ENCODE measurements at regions of chr14 and their contacts with region 1.

Region 1: GRCh38 chr14:91286530-91286937 is 42.0 kb upstream of the GPR68 start:
- DNase-seq: peak; percentile 75 to 83
- H3K4me3 ChIP-seq: no peak overlapping the region
- H3K27ac ChIP-seq: no peak overlapping the region
- H3K4me1 ChIP-seq: peaks cover 0 to 8% of the 10 kb centered on the region in 2 donors
- H3K27me3 ChIP-seq: no peaks in the 10 kb centered on the region
- CTCF ChIP-seq: peak; percentile 59 to 95 (median 84)
- POLR2A ChIP-seq: no peak

Region 2: GRCh38 chr14:90903101-90903500 is 383.4 kb before region 1 on chr14:
- intact Hi-C with region 1: loop called (anchors 5 kb)
- DNase-seq: peak; percentile 53 to 68
- H3K4me3 ChIP-seq: no peak overlapping the region
- H3K27ac ChIP-seq: no peak overlapping the region
- H3K4me1 ChIP-seq: no peaks in the 10 kb centered on the region
- H3K27me3 ChIP-seq: no peaks in the 10 kb centered on the region
- CTCF ChIP-seq: peak; percentile 32 to 89 (median 69)
- POLR2A ChIP-seq: no peak

Region 3: DNA sequence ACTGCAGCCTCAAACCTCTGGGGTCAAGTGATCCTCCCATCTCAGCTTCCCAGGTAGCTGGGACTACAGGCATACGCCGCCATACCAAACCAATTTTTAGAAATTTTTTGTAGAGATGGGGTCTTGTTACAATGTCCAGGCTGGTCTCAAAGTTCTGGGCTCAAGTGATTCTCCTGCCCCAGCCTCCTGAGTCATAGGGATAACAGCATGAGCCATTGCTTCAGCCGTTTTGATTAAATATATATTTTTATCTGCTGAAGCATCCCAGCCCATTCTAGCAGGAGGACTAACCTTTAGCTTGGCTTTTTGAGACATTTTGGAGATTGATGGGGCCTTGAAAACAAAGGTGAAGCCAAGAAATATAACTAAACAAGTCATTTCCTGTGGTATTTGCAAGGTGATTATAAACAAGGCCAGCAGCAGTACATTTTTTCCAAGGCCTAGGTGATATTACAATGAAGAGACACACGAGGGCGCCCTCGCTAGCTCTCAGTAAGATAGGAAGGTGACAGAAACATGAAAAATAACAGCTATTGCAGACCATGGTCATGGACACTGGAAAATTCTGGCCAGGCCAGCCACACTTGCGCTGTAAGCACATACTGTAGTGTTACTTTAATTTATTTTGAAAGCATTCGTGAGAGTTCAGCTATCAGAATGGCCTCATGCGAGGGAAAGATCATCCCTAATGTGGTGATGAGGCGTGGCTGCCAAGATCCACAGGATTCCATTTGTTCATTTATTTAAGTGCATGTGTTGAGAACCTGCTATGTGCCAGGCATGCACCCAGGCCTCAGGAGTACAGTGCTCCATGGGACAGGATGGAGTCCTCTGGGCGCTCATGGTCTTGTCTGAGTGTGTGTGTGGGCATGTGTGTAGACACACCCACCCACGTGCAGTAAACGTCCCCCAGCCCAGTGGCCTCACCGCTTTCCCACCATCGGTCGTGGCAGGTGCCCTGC is 109.2 kb before region 1 on chr14:
- intact Hi-C with region 1: loop called (anchors 5 kb)
- DNase-seq: peak; percentile 56 to 59
- H3K4me3 ChIP-seq: no peak overlapping the region
- H3K27ac ChIP-seq: no peak overlapping the region
- H3K4me1 ChIP-seq: no peaks in the 10 kb centered on the region
- H3K27me3 ChIP-seq: no peaks in the 10 kb centered on the region
- CTCF ChIP-seq: peak; percentile 65 to 81 (median 72)
- POLR2A ChIP-seq: no peak